ENCODE measurements at regions of chr20 and their contacts with region 1.

Region 1: DNA sequence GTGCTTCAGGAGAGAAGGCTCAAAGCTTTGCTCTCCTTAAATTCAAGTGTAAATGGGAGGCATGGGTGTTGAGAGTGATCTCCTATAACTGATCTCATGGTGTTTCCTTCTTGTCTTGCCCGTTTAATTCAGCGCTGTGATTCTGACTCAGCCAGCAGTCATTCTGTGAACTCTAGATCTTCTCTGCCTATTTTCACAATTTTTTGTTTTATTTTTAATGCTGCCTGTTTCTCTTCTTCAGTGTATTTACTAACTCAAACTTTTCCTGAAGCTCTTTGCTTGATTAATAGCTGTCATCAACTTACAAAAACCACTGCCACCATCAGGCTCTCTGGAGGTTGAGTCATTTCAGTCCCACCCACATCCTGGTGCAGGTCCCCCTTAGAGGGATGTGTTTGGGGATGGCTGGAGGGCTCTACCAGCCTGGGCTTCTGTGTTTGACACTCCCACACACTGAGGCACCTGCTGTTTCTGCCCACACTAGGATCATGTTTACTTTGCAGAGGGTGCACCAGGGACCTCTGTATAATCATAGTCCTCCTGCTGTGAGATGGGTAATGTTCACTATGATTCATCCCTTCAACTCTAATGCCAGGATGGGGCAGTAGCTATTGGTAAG is 94.0 kb downstream of the SHLD1 start:
- DNase-seq: peak; percentile 76
- H3K4me3 Mint-ChIP-seq: no peak overlapping the region
- H3K27ac Mint-ChIP-seq: peak overlapping the region; percentile 78
- H3K4me1 Mint-ChIP-seq: peaks cover 34% of the 10 kb centered on the region
- H3K27me3 Mint-ChIP-seq: no peaks in the 10 kb centered on the region

Region 2: DNA sequence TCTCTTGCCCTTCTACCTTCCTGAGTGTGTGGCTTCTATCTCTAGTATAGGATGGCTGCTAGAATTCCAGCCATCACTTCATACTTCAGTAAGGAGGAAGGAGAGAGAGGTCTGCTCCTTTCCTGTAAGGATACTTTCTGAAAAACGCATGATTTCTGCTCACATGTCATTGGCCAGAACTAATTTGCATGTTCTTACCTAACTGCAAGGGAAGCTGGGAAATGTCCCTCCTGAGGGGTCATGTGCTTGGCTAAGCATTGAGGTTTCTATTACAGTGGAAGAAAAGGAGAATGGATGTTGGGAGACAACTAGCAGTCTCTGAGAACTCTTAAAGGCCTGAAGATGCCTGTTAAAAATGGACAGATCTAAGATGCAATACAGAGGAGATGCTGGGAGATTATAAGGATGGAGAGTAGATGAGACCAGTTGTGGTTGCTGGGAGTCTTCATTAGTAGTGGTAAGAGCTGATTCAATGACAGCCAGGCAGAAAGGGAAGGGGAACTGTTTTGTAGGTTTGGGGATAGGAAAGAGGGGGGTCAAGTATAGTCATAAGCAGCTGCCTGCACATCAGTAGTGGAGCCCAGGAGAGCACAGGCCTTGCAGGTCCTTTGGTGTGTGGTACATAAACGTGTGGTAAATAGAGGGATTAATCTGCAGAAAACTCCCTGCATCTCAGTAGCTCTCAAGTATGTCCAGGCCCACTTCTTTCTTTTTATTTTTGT is 697.1 kb before region 1 on chr20:
- CTCF ChIA-PET with region 1: no interaction called
- intact Hi-C with region 1: loop called (anchors 1 kb)
- DNase-seq: no peak
- H3K4me3 Mint-ChIP-seq: no peak overlapping the region
- H3K27ac Mint-ChIP-seq: no peak overlapping the region
- H3K4me1 Mint-ChIP-seq: peaks cover 54% of the 10 kb centered on the region
- H3K27me3 Mint-ChIP-seq: no peaks in the 10 kb centered on the region

Region 3: GRCh38 chr20:5918856-5919625 is 74.9 kb after region 1 on chr20:
- CTCF ChIA-PET with region 1: no interaction called
- intact Hi-C with region 1: loop called (anchors 5 kb)
- DNase-seq: peak; percentile 16
- H3K4me3 Mint-ChIP-seq: no peak overlapping the region
- H3K27ac Mint-ChIP-seq: no peak overlapping the region
- H3K4me1 Mint-ChIP-seq: peaks cover 14% of the 10 kb centered on the region
- H3K27me3 Mint-ChIP-seq: peaks cover 4% of the 10 kb centered on the region

Region 4: DNA sequence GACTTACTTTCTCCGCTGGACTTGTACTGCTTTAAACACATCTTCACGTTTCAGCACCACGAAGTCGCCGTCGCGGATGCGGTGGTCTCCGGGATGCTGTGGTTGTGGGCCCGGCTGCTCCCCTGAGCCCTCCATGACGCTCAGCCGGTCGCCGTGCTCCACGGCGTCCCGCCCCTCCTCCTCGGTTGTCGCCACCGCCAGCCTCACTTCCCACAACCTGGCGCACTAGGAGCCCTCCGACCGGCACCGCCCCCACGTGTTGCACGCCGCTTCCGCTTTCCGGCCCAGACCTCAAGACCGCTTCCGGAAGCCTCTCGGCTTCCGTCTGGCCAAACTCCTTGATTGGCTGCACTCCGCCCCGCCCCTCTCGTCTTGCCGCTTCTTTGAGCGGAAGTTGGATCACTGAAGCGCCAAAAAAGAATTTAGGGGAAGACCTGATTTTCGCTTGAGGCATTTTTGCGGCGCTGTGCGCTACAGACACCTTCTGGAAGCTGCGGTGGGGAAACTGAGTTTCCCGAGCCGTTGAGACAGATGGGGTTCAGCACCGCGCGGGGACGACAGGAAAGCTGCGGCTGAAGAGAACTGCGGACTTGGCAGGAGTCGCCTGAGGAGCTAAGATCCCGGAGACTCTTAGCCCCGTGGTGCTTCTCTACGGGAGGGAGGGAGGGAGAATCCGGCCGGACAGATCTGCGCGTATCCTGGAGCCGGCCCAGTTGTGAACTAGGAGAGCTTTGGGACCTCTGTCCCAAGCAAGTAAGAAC is 106.3 kb after region 1 on chr20 and contains the starts of genes MCM8 and TRMT6:
- CTCF ChIA-PET with region 1: no interaction called
- intact Hi-C with region 1: loop called (anchors 1 kb)
- DNase-seq: peak; percentile 98
- H3K4me3 Mint-ChIP-seq: peak within 1 kb of the TSS; percentile 97
- H3K27ac Mint-ChIP-seq: peak within 1 kb of the TSS; percentile 95
- H3K4me1 Mint-ChIP-seq: peaks cover 61% of the 10 kb centered on the region
- H3K27me3 Mint-ChIP-seq: no peaks in the 10 kb centered on the region
- total RNA-seq, gene MCM8: 49.6 to 50.3 TPM
- total RNA-seq, gene TRMT6: 11.5 to 11.8 TPM